Psoas muscle (tissue), 8 donors: ENCODE measurements at regions of chr14 and their contacts with region 1.

Region 1: GRCh38 chr14:36820111-36820709 is 158.6 kb downstream of the PAX9 start:
- DNase-seq: no peak
- ATAC-seq: no peak
- H3K4me3 ChIP-seq: no peak overlapping the region
- H3K27ac ChIP-seq: no peak overlapping the region
- H3K4me1 ChIP-seq: no peaks in the 10 kb centered on the region
- H3K27me3 ChIP-seq: no peaks in the 10 kb centered on the region
- CTCF ChIP-seq: no peak

Region 2: DNA sequence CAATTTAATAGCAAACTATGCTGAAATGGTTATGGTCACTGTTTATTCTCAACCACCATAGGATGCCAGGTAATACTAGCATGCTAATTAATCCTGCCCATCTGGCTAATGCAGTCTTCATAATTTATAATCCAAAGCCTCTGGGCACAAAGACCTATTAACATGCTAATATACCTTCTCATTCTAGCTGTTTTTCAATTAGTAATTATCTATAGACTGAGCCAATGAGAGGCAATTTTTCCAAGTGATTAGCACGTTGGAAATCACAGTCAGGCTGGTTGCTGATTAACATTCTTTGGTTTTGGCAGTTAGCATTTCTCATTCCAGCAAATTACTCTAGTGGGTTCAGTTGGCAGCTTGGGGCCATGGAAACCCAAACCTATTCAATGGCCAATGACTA is 1925.7 kb after region 1 on chr14:
- intact Hi-C with region 1: loop called in 1 of 2 experiments (anchors 5 kb)
- DNase-seq: no peak
- ATAC-seq: no peak
- H3K4me3 ChIP-seq: no peak overlapping the region
- H3K27ac ChIP-seq: no peak overlapping the region
- H3K4me1 ChIP-seq: no peaks in the 10 kb centered on the region
- H3K27me3 ChIP-seq: no peaks in the 10 kb centered on the region
- CTCF ChIP-seq: no peak